ENCODE measurements at regions of chr18 and their contacts with region 1.

Region 1: GRCh38 chr18:6521795-6522418 is 107.2 kb upstream of the L3MBTL4 start:
- H3K4me3 ChIP-seq: no peak overlapping the region
- H3K27ac ChIP-seq: no peak overlapping the region
- H3K4me1 ChIP-seq: no peaks in the 10 kb centered on the region
- CTCF ChIP-seq: 0 out of 2 replicates have a peak, but pooled peaks have one; percentile 17

Region 2: GRCh38 chr18:5879479-5879882 is 642.4 kb before region 1 on chr18:
- CTCF ChIA-PET with region 1: interaction called, 17 read pairs
- POLR2A ChIA-PET with region 1: no interaction called
- H3K4me3 ChIP-seq: no peak overlapping the region
- H3K27ac ChIP-seq: no peak overlapping the region
- H3K4me1 ChIP-seq: no peaks in the 10 kb centered on the region
- CTCF ChIP-seq: peak; percentile 62

Region 3: DNA sequence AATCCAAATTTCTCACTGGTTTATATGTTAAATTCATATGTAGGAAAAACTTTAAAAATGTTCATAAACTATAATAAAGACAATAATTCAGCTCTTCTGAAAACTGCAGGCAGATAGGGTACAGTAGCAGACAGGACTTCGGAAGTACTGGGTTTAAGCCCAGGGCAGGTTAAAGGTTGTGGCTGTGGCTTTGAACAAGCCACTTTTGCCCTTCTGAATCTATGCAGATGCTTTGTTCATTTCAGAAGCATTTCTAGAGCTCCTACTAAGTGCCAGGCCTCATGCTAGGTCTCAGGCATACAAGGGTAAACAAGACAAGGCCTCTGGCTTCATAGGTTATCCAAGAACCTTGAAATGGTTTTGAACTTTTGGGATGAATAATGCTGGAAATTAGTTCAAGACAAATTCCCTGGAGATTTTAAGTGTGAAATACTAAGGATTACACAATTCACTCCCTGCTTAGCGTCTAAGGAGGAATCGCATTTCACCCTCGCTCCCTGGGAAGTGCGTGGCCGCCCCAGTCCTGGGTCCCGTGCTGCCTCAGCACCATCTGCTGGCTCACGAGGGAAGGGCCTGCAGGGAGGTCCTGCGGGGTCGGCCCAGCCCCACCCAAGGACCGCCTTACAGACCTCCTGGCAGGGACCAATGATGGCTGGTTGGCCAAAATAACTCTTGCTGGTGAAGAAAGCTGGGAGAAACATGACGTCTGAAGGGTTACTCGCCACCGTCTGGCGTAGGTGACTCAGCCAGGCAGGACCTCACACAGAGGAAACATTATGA is 39.5 kb before region 1 on chr18:
- CTCF ChIA-PET with region 1: interaction called, 16 read pairs
- POLR2A ChIA-PET with region 1: no interaction called
- H3K4me3 ChIP-seq: no peak overlapping the region
- H3K27ac ChIP-seq: no peak overlapping the region
- H3K4me1 ChIP-seq: 0 out of 2 replicates have a peak, but pooled peaks cover 2% of the 10 kb centered on the region
- CTCF ChIP-seq: peak; percentile 92

Region 4: DNA sequence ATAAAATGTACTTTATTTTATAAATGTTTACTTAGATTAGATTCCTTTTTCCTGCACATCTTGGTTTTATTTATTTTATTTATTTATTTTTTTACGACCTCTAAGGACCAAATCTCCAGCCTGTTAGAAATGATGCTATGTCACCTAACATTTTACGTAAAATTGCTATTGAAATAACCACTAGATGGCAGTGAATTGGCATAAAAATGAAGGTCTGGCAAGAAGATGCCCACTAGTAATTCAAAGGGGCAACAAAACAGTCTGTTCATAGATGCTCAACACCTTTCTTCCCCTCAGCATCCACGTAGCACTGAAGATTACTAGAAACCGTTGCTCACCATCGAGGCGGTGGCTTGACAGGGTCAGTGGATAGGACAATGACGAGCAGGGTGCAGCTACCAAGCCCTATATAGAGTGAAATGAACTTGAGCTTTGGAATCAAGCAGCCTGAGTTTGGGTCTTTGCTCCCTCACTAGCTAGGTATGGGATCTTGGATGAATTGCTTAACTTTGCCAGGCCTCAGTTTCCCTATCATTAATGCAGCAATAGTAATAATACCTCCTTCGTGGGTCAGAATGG is 21.5 kb after region 1 on chr18:
- CTCF ChIA-PET with region 1: interaction called, 10 read pairs
- POLR2A ChIA-PET with region 1: no interaction called
- H3K4me3 ChIP-seq: no peak overlapping the region
- H3K27ac ChIP-seq: no peak overlapping the region
- H3K4me1 ChIP-seq: no peaks in the 10 kb centered on the region; the same call in 1 of the 2 replicates
- CTCF ChIP-seq: peak; percentile 52; the same call in 1 of the 2 replicates

Region 5: GRCh38 chr18:6591491-6591890 is 69.6 kb after region 1 on chr18:
- CTCF ChIA-PET with region 1: no interaction called
- POLR2A ChIA-PET with region 1: no interaction called
- H3K4me3 ChIP-seq: no peak overlapping the region
- H3K27ac ChIP-seq: no peak overlapping the region
- H3K4me1 ChIP-seq: peaks cover 2% of the 10 kb centered on the region; the same call in 1 of the 2 replicates
- CTCF ChIP-seq: no peak

Region 6: DNA sequence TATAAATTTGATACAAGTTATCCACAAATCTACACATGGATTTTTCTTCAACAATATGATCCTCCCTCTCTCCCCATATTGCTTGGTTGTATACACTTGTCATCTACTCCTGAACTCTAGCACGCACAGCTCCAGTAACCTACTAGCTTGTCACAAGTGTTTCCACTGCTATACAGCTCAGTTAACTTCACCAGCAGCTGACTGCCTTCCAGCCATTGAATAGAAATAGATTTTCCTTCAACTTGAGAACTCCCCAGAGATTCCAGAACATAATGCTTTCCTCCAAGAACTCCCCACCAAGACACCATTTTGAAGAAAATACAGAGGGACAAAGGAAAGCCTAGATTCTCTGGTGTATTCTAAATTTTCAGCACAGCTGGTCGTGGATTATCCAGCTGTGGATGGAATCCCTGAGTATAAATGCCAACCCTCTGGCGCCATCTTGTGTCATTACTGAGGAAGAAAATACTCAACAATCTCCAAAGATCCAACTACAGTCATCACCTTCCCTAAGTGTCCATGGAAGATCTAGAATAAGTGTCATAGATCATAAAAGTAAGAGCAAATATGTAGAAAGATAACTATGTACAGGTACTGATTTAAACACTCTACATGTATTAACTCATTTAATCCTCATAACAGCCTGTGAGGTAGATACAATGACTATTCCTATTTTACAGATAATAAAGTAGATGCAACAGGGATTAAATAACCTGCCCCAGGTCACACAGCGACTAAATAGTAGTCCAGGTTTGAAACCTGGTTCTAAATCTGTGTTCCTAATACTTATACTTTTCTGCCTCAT is 364.3 kb after region 1 on chr18:
- CTCF ChIA-PET with region 1: interaction called, 20 read pairs
- POLR2A ChIA-PET with region 1: no interaction called
- H3K4me3 ChIP-seq: no peak overlapping the region
- H3K27ac ChIP-seq: no peak overlapping the region
- H3K4me1 ChIP-seq: no peaks in the 10 kb centered on the region
- CTCF ChIP-seq: peak; percentile 51

Measured in HEK293 (cell line).